ENCODE measurements at regions of chr22 and their contacts with region 1.

Region 1: DNA sequence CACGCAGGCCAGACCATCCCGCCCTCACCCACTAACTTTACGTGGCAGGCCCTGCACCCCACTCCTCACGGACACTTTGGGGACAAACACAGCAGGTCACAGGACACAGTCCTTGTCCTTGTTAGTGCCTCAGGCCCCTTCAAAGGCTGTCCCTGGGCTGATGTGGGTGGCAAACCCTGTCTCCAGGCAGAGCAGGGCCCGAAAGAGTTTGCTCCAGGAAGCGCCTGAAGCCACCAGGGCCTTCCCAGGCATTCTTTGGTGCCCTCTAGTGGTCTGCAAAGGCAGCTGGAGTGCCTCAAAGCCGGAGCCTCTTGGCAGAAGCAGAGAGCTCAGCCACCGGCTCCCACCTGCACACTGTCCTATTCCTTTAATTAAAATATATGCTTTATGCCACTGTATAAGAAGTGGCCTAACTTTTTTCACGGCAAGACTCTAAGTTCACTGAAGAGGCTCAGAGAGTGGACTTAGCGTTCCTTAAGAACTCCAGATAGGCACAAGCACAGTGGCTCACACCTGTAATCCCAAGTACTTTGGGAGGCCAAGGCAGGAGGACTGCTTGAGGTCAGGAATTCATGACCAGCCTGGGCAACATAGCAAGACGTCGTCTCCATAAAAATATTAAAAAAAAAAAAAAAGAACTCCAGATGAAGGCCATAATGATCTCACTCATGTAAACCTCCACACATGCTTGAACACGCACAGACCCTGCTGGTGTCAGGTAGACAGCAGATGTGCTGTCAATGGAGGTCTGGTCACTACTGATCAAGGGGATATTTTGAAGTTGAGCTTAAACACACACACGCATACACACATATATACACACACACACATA is 11.1 kb downstream of the TXN2 start:
- DNase-seq: peak; percentile 88
- ATAC-seq: peak; percentile 93
- H3K4me3 ChIP-seq: no peak overlapping the region
- H3K4me3 Mint-ChIP-seq: no peak overlapping the region
- H3K27ac ChIP-seq: no peak overlapping the region
- H3K27ac Mint-ChIP-seq: peak overlapping the region; percentile 72
- H3K4me1 ChIP-seq: peaks cover 6 to 17% of the 10 kb centered on the region in 2 donors
- H3K4me1 Mint-ChIP-seq: peaks cover 14% of the 10 kb centered on the region
- H3K27me3 ChIP-seq: no peaks in the 10 kb centered on the region
- H3K27me3 Mint-ChIP-seq: no peaks in the 10 kb centered on the region
- CTCF ChIP-seq: peak; percentile 96

Region 2: GRCh38 chr22:36123673-36124630 is 346.4 kb before region 1 on chr22:
- CTCF ChIA-PET with region 1: no interaction called
- POLR2A ChIA-PET with region 1: no interaction called
- intact Hi-C with region 1: no loop called
- DNase-seq: peak; percentile 94
- ATAC-seq: peak; percentile 100
- H3K4me3 ChIP-seq: peak overlapping the region; percentile 15 to 55 (median 44)
- H3K4me3 Mint-ChIP-seq: peak overlapping the region; percentile 88
- H3K27ac ChIP-seq: peak overlapping the region in 1 of 2 donors; percentile 14
- H3K27ac Mint-ChIP-seq: peak overlapping the region; percentile 83
- H3K4me1 ChIP-seq: peaks cover 0 to 9% of the 10 kb centered on the region in 2 donors
- H3K4me1 Mint-ChIP-seq: peaks cover 6% of the 10 kb centered on the region
- H3K27me3 ChIP-seq: peaks cover 0 to 14% (median 7%) of the 10 kb centered on the region in 4 experiments
- H3K27me3 Mint-ChIP-seq: peaks cover 9% of the 10 kb centered on the region
- CTCF ChIP-seq: peak; percentile 96

Region 3: GRCh38 chr22:36301384-36301828 is 169.0 kb before region 1 on chr22:
- CTCF ChIA-PET with region 1: interaction called, 607 read pairs
- POLR2A ChIA-PET with region 1: interaction called, 5 read pairs
- intact Hi-C with region 1: loop called (anchors 1 kb)
- DNase-seq: peak; percentile 85
- ATAC-seq: peak; percentile 89
- H3K4me3 ChIP-seq: no peak overlapping the region
- H3K4me3 Mint-ChIP-seq: no peak overlapping the region
- H3K27ac ChIP-seq: peak overlapping the region in 1 of 2 donors; percentile 25
- H3K27ac Mint-ChIP-seq: peak overlapping the region; percentile 68
- H3K4me1 ChIP-seq: peaks cover 0 to 4% of the 10 kb centered on the region in 2 donors
- H3K4me1 Mint-ChIP-seq: peaks cover 8% of the 10 kb centered on the region
- H3K27me3 ChIP-seq: no peaks in the 10 kb centered on the region
- H3K27me3 Mint-ChIP-seq: no peaks in the 10 kb centered on the region
- CTCF ChIP-seq: peak; percentile 97

Region 4: GRCh38 chr22:36344106-36344827 is 126.1 kb before region 1 on chr22:
- CTCF ChIA-PET with region 1: interaction called, 14 read pairs
- POLR2A ChIA-PET with region 1: no interaction called
- intact Hi-C with region 1: no loop called
- DNase-seq: no peak
- ATAC-seq: no peak
- H3K4me3 ChIP-seq: no peak overlapping the region
- H3K4me3 Mint-ChIP-seq: no peak overlapping the region
- H3K27ac ChIP-seq: peak overlapping the region in 1 of 2 donors; percentile 18
- H3K27ac Mint-ChIP-seq: peak overlapping the region; percentile 84
- H3K4me1 ChIP-seq: peaks cover 0 to 11% of the 10 kb centered on the region in 2 donors
- H3K4me1 Mint-ChIP-seq: peaks cover 33% of the 10 kb centered on the region
- H3K27me3 ChIP-seq: no peaks in the 10 kb centered on the region
- H3K27me3 Mint-ChIP-seq: no peaks in the 10 kb centered on the region
- CTCF ChIP-seq: no peak

Region 5: DNA sequence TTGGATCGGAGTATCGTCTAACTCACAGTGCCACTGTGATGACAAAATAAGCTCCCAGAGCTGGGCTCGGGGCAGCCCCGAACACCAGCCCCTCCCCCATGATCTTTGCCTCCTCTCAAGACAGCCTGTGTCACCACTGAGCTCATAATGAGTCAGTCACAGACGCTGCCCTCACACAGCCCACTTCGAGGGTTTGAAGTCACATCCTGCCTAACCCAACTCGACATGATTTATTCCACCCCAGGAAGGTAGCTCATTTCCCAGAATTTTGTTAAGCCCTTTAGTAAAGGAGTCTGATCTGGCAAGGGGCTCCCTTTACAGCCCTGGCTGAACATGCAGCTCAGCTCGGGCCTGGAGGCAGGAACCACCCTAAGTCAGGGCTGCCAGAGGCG is 105.4 kb before region 1 on chr22:
- CTCF ChIA-PET with region 1: interaction called, 13 read pairs
- POLR2A ChIA-PET with region 1: no interaction called
- intact Hi-C with region 1: no loop called
- DNase-seq: peak; percentile 77
- ATAC-seq: peak; percentile 88
- H3K4me3 ChIP-seq: no peak overlapping the region
- H3K4me3 Mint-ChIP-seq: peak overlapping the region; percentile 83
- H3K27ac ChIP-seq: peak overlapping the region; percentile 43 to 92
- H3K27ac Mint-ChIP-seq: peak overlapping the region; percentile 97
- H3K4me1 ChIP-seq: peaks cover 92 to 99% of the 10 kb centered on the region in 2 donors
- H3K4me1 Mint-ChIP-seq: peaks cover 91% of the 10 kb centered on the region
- H3K27me3 ChIP-seq: no peaks in the 10 kb centered on the region
- H3K27me3 Mint-ChIP-seq: no peaks in the 10 kb centered on the region
- CTCF ChIP-seq: no peak

Region 6: DNA sequence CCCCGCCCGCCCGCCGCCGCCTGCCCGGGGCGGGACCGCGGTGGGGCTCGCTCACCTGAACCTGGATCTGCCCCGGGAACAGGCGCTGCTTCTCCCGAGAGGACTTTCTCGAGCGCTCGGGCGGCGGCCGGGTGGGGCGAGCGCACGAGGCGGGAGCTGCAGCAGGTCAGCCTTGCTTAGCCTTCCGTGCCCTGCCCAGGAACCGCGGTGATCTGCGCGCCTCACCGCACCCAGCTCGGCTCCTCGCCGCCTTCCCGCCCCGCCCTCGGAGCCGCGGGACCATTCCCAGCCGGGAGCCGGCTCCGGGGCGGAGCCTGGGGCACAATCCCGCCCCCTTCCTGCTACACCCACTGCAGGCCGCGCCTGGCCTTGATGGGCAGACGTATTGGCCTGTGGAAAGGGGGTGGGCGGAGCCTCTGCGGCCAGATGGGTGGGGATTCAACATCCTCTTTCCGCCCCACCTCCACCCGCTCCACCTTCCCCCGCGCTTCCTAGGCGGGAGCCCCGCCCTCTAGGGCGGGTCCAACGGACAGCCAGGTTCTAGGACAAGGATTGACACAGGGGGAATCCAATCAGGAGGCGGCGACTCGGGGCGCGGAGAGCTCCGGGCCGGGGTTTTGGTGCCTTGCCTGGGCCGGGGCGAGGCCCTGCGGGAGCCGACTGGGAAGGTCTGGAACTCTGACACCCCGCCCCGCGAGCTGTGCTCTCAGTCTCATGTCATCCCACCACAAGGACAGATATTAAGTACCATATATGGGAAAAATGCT is 82.4 kb before region 1 on chr22 and contains the start of gene MYH9:
- CTCF ChIA-PET with region 1: interaction called, 13 read pairs
- POLR2A ChIA-PET with region 1: no interaction called
- intact Hi-C with region 1: no loop called
- DNase-seq: peak; percentile 99
- ATAC-seq: peak; percentile 81
- H3K4me3 ChIP-seq: peak within 1 kb of the TSS; percentile 67 to 95 (median 87)
- H3K4me3 Mint-ChIP-seq: peak within 1 kb of the TSS; percentile 98
- H3K27ac ChIP-seq: peak within 1 kb of the TSS; percentile 79 to 93
- H3K27ac Mint-ChIP-seq: peak within 1 kb of the TSS; percentile 92
- H3K4me1 ChIP-seq: peaks cover 57 to 70% of the 10 kb centered on the region in 2 donors
- H3K4me1 Mint-ChIP-seq: peaks cover 54% of the 10 kb centered on the region
- H3K27me3 ChIP-seq: no peaks in the 10 kb centered on the region
- H3K27me3 Mint-ChIP-seq: no peaks in the 10 kb centered on the region
- CTCF ChIP-seq: no peak
- total RNA-seq, gene MYH9: 552 and 554 TPM in 2 replicates

Region 7: DNA sequence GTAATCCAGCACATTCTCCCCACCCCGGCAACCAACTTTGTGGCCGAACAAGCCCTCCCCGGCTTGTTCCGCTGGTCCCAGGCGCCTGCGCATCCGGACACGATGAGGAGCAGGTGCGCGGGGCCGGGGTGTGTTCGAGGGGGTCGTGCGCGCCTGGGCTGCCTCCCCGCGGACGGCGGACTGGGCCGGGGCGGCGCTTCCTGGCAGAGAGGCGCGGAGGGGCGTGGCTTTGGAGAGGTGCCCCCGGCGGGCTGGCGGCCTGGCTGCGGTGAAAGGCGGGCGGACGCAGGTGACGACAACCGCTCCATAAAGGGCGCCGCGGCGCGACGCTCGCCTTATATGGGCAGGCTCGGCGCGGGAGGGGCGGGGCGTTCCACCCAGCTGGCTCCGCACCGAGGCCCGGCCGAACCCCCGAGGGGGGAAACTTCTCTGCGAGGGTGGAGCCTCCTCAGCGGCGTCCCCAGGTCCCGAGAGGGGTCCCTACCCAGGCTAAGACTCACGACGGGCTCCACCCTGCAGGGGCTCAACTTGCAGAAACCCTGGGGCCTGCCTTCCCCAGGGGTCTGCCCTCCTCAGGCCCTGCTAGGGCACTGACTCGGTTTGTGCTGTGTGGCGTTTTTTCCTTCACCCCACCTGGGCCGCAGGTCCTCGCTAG is 15.3 kb before region 1 on chr22:
- CTCF ChIA-PET with region 1: interaction called, 33 read pairs
- POLR2A ChIA-PET with region 1: interaction called, 3 read pairs
- intact Hi-C with region 1: loop called (anchors 1 kb)
- DNase-seq: peak; percentile 96
- ATAC-seq: peak; percentile 62
- H3K4me3 ChIP-seq: peak overlapping the region; percentile 18 to 59 (median 54)
- H3K4me3 Mint-ChIP-seq: peak overlapping the region; percentile 77
- H3K27ac ChIP-seq: peak overlapping the region; percentile 84 to 93
- H3K27ac Mint-ChIP-seq: peak overlapping the region; percentile 91
- H3K4me1 ChIP-seq: peaks cover 50 to 60% of the 10 kb centered on the region in 2 donors
- H3K4me1 Mint-ChIP-seq: peaks cover 45% of the 10 kb centered on the region
- H3K27me3 ChIP-seq: no peaks in the 10 kb centered on the region
- H3K27me3 Mint-ChIP-seq: no peaks in the 10 kb centered on the region
- CTCF ChIP-seq: no peak

Region 8: DNA sequence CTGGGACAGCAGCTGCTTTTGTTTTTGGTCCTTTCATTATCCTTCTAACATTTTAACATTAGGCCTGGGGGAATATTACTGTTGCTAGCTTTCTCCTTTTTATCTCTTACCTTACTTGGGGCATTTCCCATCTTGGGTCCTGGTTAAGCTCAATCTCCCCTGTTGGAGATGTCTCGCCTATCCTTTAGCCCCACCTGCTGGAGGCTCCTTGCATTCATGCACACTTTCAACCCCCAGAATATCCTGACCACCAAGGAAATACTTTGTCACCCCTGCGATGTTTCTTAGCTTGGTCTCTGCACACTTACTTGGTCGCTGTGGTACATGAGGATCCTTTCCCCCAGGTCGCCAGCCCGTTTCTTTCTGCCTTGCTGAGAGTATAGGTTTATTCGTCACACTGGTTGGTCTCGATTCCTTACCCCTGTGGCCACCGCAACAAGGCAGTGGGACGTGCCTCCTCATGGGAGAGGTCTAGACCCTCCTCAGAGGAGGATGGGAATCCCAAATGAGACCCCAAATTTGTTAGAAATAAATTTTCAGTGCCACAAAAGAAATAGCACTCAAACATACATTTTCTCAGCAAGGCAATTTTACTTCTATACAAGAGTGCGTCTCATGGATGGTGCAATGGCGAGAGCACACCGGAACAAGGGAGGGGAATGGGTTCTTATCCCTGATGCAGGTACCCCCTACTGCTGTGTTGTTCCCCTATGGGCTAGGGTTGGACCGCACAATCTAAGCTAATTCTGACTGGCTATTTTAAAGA is 16.4 kb after region 1 on chr22:
- CTCF ChIA-PET with region 1: interaction called, 26 read pairs
- POLR2A ChIA-PET with region 1: interaction called, 5 read pairs
- intact Hi-C with region 1: no loop called
- DNase-seq: peak; percentile 77
- ATAC-seq: no peak
- H3K4me3 ChIP-seq: no peak overlapping the region
- H3K4me3 Mint-ChIP-seq: no peak overlapping the region
- H3K27ac ChIP-seq: no peak overlapping the region
- H3K27ac Mint-ChIP-seq: peak overlapping the region; percentile 38
- H3K4me1 ChIP-seq: peaks cover 11 to 14% of the 10 kb centered on the region in 2 donors
- H3K4me1 Mint-ChIP-seq: peaks cover 12% of the 10 kb centered on the region
- H3K27me3 ChIP-seq: no peaks in the 10 kb centered on the region
- H3K27me3 Mint-ChIP-seq: no peaks in the 10 kb centered on the region
- CTCF ChIP-seq: peak; percentile 74

Measured in B cell (primary cell).